Naive thymus-derived CD4-positive, alpha-beta T cell (primary cell): ENCODE measurements at regions of chr12 and their contacts with region 1.

Region 1: DNA sequence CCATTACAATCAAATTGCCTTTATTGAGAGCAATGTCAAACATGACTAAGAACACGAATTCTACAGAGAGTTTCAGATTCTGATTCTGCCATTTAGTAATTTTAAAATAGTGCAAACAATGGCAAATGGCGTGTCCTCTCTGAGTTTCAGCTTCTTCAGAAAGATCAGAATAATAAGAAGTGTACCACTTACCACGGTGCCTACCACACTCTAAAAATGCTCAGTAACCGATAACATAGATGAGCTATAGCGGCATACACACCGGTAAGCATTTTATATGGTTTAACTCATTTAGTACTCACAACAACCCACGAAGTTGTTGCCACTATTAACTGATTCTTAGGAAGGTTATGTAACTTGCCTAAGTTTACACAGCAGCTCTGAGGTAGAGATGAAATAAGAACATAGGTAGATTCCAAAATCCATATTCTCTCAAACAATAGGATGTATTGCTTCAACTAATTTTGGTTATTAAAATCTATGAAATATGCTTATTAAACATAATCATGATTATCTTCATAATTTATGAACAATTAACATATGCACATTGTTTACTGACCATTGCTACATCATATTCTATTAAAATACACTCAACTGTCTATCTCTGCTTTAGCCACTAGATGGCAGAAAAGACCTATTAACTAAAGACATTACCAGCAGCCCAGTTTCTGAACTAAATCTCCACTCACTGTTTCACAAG is 38.3 kb downstream of the SLC6A15 start:
- DNase-seq: peak in 5 of 9 donors; percentile 2 to 40 (median 25)
- ATAC-seq: peak; percentile 67
- H3K4me3 ChIP-seq: no peak overlapping the region
- H3K4me3 Mint-ChIP-seq: no peak overlapping the region
- H3K27ac ChIP-seq: no peak overlapping the region
- H3K27ac Mint-ChIP-seq: no peak overlapping the region
- H3K4me1 ChIP-seq: no peaks in the 10 kb centered on the region
- H3K4me1 Mint-ChIP-seq: no peaks in the 10 kb centered on the region
- H3K27me3 ChIP-seq: no peaks in the 10 kb centered on the region
- H3K27me3 Mint-ChIP-seq: peaks cover 0 to 10% (median 0%) of the 10 kb centered on the region in 5 donors

Region 2: GRCh38 chr12:85029456-85029855 is 155.2 kb after region 1 on chr12:
- CTCF ChIA-PET with region 1: interaction called, 5 read pairs
- POLR2A ChIA-PET with region 1: no interaction called
- intact Hi-C with region 1: loop called (anchors 1 kb)
- DNase-seq: peak in 1 of 9 donors; percentile 9
- ATAC-seq: no peak
- H3K4me3 ChIP-seq: no peak overlapping the region
- H3K4me3 Mint-ChIP-seq: no peak overlapping the region
- H3K27ac ChIP-seq: no peak overlapping the region
- H3K27ac Mint-ChIP-seq: no peak overlapping the region
- H3K4me1 ChIP-seq: no peaks in the 10 kb centered on the region
- H3K4me1 Mint-ChIP-seq: no peaks in the 10 kb centered on the region
- H3K27me3 ChIP-seq: no peaks in the 10 kb centered on the region
- H3K27me3 Mint-ChIP-seq: peaks cover 0 to 9% (median 0%) of the 10 kb centered on the region in 5 donors

Region 3: DNA sequence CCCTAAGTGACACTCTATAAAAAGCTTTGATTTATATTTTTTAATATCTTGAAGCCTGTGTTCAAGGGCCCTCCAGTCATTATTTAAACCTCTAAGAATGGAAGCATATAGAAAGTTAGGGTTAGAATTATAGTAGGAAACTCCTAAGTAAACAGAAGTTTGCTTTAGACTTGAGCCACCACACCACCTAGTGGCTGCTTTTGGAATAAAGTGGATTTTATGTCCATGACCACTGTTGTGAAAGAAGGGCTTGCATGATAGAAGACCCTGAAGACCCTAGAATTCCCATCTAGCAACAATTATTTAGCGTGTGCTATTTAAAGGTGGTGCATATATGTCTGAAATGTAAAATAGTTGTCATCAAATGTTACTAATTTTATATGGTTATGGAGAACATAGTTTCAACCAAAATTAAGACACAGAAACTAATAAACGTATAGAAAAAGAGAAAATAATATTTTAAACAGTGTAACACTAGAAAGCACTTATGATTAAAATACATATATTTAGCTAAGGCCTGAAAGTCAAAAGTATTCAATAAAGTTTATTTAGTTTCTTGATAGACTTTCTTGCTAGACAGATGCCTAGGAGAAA is 183.2 kb after region 1 on chr12:
- CTCF ChIA-PET with region 1: no interaction called
- POLR2A ChIA-PET with region 1: no interaction called
- intact Hi-C with region 1: loop called (anchors 1 kb)
- DNase-seq: peak in 3 of 9 donors; percentile 2 to 11 (median 7)
- ATAC-seq: no peak
- H3K4me3 ChIP-seq: no peak overlapping the region
- H3K4me3 Mint-ChIP-seq: no peak overlapping the region
- H3K27ac ChIP-seq: no peak overlapping the region
- H3K27ac Mint-ChIP-seq: no peak overlapping the region
- H3K4me1 ChIP-seq: no peaks in the 10 kb centered on the region
- H3K4me1 Mint-ChIP-seq: peaks cover 0 to 2% (median 0%) of the 10 kb centered on the region in 7 donors
- H3K27me3 ChIP-seq: no peaks in the 10 kb centered on the region
- H3K27me3 Mint-ChIP-seq: peaks cover 0 to 6% (median 0%) of the 10 kb centered on the region in 5 donors